ENCODE measurements at regions of chr16 and their contacts with region 1.

Region 1: DNA sequence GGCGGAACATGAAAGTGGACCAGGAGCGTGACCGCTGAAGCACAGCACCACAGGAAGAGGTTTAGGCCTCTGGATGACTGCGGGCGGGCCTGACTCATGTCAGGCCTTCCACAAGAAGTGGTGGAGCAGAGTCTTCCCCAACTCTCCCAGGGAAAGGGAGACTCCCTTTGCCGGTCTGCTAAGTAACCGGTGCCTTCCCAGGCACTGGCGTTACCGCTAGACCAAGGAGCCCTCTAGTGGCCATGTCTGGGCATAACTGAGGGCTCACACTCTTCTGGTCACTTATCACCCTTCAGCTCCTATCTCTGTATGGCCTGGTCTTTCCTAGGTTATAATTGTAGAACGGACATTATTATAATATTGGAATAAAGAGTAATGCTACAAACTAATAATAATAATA is 1931.9 kb downstream of the TP53TG3F start:
- DNase-seq: peak; percentile 33
- H3K4me3 ChIP-seq: peak overlapping the region in 1 of 2 experiments; percentile 12; a peak in 1 of 4 replicates
- H3K27ac ChIP-seq: no peak overlapping the region
- H3K4me1 ChIP-seq: peaks cover 0 to 2% of the 10 kb centered on the region in 2 experiments; a peak in 2 of 4 replicates
- H3K27me3 ChIP-seq: no peaks in the 10 kb centered on the region
- CTCF ChIP-seq: peak; percentile 89
- EP300 ChIP-seq: no peak
- RAD21 ChIP-seq: peak; percentile 93

Region 2: GRCh38 chr16:35188288-35189155 is 202.8 kb before region 1 on chr16:
- CTCF ChIA-PET with region 1: interaction called, 11 read pairs
- POLR2A ChIA-PET with region 1: no interaction called
- DNase-seq: peak; percentile 63
- H3K4me3 ChIP-seq: no peak overlapping the region
- H3K27ac ChIP-seq: no peak overlapping the region
- H3K4me1 ChIP-seq: no peaks in the 10 kb centered on the region
- H3K27me3 ChIP-seq: no peaks in the 10 kb centered on the region
- CTCF ChIP-seq: peak; percentile 64
- EP300 ChIP-seq: no peak
- RAD21 ChIP-seq: peak; percentile 58

Region 3: GRCh38 chr16:35377148-35377547 is 14.2 kb before region 1 on chr16:
- CTCF ChIA-PET with region 1: interaction called, 20 read pairs
- POLR2A ChIA-PET with region 1: no interaction called
- DNase-seq: no peak
- H3K4me3 ChIP-seq: no peak overlapping the region
- H3K27ac ChIP-seq: no peak overlapping the region
- H3K4me1 ChIP-seq: no peaks in the 10 kb centered on the region
- H3K27me3 ChIP-seq: no peaks in the 10 kb centered on the region
- CTCF ChIP-seq: no peak
- EP300 ChIP-seq: no peak
- RAD21 ChIP-seq: no peak

Region 4: GRCh38 chr16:35409503-35409902 is 18.2 kb after region 1 on chr16:
- CTCF ChIA-PET with region 1: interaction called, 30 read pairs
- POLR2A ChIA-PET with region 1: no interaction called
- DNase-seq: no peak
- H3K4me3 ChIP-seq: no peak overlapping the region
- H3K27ac ChIP-seq: no peak overlapping the region
- H3K4me1 ChIP-seq: no peaks in the 10 kb centered on the region; a peak in 1 of 4 replicates
- H3K27me3 ChIP-seq: no peaks in the 10 kb centered on the region
- CTCF ChIP-seq: no peak
- EP300 ChIP-seq: no peak
- RAD21 ChIP-seq: no peak

Measured in SK-N-SH (cell line).